ENCODE measurements at regions of chr2 and their contacts with region 1.

Region 1: DNA sequence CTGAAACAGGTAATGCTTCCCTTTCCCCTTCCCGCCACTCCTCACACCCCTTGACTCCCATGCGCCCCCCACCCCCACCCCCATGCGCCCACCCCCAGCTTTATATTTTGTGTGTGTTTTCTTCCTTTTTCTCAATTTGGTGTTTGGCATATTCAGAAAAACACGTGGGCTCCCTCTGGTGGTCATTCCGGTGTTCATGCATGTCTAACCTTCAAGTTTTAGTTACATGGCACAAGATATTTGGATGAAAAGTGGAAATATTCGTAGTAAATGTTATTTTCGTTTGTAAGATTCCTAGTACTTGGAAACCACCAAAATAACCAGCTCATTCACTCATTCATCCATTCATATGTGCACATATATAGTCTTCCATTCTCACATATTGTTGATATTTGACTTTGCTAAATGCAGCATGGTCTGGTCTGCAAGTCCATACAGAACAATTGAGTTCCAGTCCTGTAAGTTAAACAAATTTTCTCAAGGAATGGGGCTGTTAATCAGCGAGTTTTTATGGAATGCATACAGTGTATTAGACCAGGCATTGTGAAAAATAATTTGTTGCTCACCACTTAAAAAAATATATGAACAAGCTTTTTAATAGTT is 143.6 kb upstream of the MAP3K20 start:
- DNase-seq: peak in 7 of 10 donors; percentile 58 to 86 (median 69)
- H3K4me3 ChIP-seq: peak overlapping the region in 20 of 59 donors; percentile 7 to 42 (median 26)
- H3K27ac ChIP-seq: peak overlapping the region in 37 of 59 donors; percentile 6 to 85 (median 67)
- H3K27me3 ChIP-seq: no peaks in the 10 kb centered on the region
- CTCF ChIP-seq: peak; percentile 61 to 85 (median 76)

Region 2: DNA sequence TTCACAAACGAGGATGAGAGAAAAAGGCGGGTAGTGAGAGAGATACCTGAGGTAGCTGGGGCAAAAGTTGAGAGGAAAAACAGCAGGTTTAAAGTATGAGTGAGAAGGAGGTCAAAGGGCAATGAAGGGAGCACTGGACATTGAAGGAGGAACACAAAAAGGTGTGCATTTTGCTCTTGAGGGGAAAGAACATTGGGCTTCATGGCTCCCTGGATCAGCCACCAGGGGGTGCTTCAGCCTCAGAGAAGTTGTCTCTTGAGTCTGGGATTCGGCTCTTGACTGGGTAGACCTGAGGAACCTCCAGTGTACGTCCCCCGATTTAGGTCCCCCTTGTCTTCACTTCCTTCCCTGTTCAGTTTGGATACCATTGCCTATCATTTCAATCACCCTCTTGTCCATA is 67.8 kb before region 1 on chr2:
- intact Hi-C with region 1: loop called in 1 of 2 experiments (anchors 2 kb)
- DNase-seq: peak in 6 of 10 donors; percentile 39 to 66 (median 53)
- H3K4me3 ChIP-seq: no peak overlapping the region
- H3K27ac ChIP-seq: no peak overlapping the region
- H3K27me3 ChIP-seq: peaks cover 0 to 3% (median 0%) of the 10 kb centered on the region in 45 donors
- CTCF ChIP-seq: peak; percentile 42 to 79 (median 68)

Measured in dorsolateral prefrontal cortex (tissue), 120 donors.